Activated T-helper 1 cell treated with anti-CD3 and anti-CD28 coated beads, Interleukin-12 subunit alpha, Interleukin-12 subunit beta, Interleukin-2, Interleukin-4 antibody, amounts not matched to agents 30 ng/mL and 10 ng/mL and 1 ng/mL, durations not matched to agents 14 hours and 24 hours and 36 hours (primary cell): ENCODE measurements at regions of chr2 and their contacts with region 1.

Region 1: DNA sequence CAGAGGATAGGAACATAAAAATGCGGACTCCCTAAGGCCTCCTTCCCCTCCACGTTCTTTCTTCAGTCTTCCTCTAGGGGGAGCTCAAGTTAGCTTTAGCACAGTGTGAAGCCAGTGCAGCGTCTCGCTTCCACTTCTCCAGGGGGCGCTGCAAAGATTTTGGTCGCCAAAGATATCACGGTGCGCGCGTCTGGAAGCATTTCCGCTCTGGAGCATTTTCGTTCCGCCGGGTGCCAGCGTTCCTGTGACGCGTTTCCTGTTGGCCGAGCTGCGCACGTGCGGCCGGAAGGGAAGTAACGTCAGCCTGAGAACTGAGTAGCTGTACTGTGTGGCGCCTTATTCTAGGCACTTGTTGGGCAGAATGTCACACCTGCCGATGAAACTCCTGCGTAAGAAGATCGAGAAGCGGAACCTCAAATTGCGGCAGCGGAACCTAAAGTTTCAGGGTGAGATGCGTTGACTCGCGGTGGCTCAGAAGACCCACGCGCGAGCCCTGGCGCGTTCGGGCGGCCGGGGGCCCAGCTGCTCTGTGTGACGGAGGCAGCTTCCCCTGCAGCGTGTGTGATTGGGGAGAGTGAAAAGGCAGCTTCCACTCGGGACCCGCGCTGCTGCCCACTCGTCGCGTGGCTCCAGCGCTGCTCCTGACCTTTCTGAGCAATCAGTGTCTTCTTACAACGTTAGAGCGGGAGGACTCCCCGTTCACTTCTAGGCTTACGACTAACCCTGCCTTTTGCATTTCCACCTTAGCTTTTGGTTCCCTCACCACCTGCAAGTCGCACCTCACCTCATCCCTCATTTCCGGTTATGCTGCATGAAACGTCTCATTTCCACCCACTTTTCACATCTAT is at the start of gene DDX18:
- DNase-seq: peak; percentile 96
- H3K4me3 Mint-ChIP-seq: peak within 1 kb of the TSS; percentile 90
- H3K27ac Mint-ChIP-seq: peak within 1 kb of the TSS; percentile 94
- H3K4me1 Mint-ChIP-seq: peaks cover 40% of the 10 kb centered on the region
- H3K27me3 Mint-ChIP-seq: peaks cover 3% of the 10 kb centered on the region
- total RNA-seq, gene DDX18: 133 and 143 TPM in 2 replicates

Region 2: DNA sequence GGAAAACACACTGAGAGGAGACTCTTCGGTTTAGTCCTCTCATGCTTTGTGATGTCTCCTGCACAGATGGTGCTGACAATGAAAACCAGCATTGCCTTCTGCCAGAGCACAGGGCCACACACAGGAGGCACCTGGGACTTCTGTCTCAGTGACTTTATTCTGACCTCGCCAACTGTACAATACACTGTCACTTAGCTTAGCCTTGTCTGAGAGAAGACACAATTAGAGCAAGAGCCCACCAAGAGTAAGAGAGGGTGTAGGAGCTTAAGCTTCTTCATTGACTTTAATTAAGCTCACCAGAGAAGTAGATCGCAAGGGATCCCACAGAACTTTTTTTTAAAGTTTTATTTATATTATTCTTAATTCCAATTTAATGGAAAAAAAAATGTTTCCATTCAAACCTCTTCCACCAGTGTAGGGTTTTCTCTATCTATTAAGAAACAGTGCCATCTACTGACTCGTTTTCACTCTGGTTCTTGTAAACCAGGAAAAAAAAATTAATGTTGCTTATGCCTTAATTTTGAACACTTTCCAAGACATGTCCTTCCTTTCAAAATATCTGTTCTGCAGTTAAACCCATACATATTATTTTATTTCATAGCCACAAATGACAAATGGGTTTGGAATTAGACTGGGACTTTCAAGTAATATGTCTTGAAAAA is 42.5 kb before region 1 on chr2:
- intact Hi-C with region 1: no loop called
- DNase-seq: no peak
- H3K4me3 Mint-ChIP-seq: no peak overlapping the region
- H3K27ac Mint-ChIP-seq: no peak overlapping the region
- H3K4me1 Mint-ChIP-seq: no peaks in the 10 kb centered on the region
- H3K27me3 Mint-ChIP-seq: no peaks in the 10 kb centered on the region

Region 3: DNA sequence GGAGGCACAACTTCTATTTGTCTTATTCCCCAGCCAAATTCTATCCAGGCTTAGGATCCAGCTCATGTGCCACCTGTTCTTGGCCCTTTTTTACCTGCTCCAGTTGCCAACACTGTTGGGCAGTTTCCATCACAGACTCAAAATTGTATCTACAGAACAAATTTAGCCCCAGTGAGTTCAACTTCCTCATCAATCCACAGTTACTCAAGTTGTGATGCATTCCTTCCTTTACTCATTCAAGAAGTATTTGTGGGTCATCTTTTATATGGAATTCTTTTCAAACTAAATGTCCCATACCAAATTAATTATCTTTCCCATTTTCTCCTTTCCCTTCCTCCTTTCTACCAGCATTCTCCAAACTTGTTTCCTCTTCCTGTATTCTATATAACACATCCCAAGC is 12.8 kb before region 1 on chr2:
- intact Hi-C with region 1: loop called (anchors 1 kb)
- DNase-seq: no peak
- H3K4me3 Mint-ChIP-seq: no peak overlapping the region
- H3K27ac Mint-ChIP-seq: no peak overlapping the region
- H3K4me1 Mint-ChIP-seq: peaks cover 5% of the 10 kb centered on the region
- H3K27me3 Mint-ChIP-seq: peaks cover 13% of the 10 kb centered on the region

Region 4: GRCh38 chr2:118003396-118003824 is 188.8 kb after region 1 on chr2:
- intact Hi-C with region 1: loop called (anchors 1 kb)
- DNase-seq: peak; percentile 55
- H3K4me3 Mint-ChIP-seq: no peak overlapping the region
- H3K27ac Mint-ChIP-seq: no peak overlapping the region
- H3K4me1 Mint-ChIP-seq: peaks cover 7% of the 10 kb centered on the region
- H3K27me3 Mint-ChIP-seq: no peaks in the 10 kb centered on the region

Region 5: DNA sequence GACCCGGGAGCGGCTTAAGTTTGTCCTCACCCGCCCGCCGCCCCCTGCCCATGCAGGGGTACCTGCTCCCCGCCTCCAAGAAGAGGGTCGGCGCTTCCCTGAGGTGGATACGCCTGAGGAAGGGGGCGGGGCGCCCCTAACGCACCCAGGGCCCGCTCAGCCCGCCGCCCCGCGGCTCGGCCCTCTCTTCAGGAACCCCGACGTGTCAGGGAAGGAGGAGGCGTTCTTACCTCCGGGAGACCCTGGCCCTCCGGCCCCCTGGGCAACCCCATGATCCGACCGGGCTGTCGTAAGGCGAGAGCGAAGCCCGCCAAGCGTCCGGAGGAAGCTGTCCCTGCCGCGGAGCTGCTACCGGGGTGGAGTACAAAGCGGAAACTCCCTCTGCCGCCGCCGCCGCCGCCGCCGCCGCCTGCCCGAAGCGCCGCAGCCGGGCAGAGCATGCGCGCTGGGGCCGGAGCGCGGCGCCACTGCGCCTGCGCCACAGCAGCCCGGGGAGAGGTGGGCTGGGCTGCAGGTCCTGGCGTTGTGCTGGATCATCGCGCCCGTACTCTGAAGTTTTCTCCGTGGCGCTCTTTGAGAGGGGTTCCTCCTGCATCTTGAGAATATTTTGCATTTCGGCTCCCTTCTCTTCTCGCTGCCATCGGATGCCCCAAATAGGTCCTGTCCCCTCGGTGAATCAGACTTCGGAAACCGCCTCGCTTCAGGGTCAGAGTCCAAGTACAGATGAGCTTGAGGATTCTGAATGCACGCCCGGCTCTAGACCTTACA is 199.3 kb after region 1 on chr2 and contains the start of gene CCDC93:
- intact Hi-C with region 1: loop called (anchors 1 kb)
- DNase-seq: peak; percentile 87
- H3K4me3 Mint-ChIP-seq: peak within 1 kb of the TSS; percentile 92
- H3K27ac Mint-ChIP-seq: peak within 1 kb of the TSS; percentile 88
- H3K4me1 Mint-ChIP-seq: peaks cover 42% of the 10 kb centered on the region
- H3K27me3 Mint-ChIP-seq: no peaks in the 10 kb centered on the region
- total RNA-seq, gene CCDC93: 33.3 and 34.4 TPM in 2 replicates

Region 6: GRCh38 chr2:118186110-118186857 is 371.6 kb after region 1 on chr2:
- intact Hi-C with region 1: loop called (anchors 5 kb)
- DNase-seq: peak; percentile 83
- H3K4me3 Mint-ChIP-seq: peak overlapping the region; percentile 90
- H3K27ac Mint-ChIP-seq: peak overlapping the region; percentile 98
- H3K4me1 Mint-ChIP-seq: peaks cover 53% of the 10 kb centered on the region
- H3K27me3 Mint-ChIP-seq: no peaks in the 10 kb centered on the region

Region 7: DNA sequence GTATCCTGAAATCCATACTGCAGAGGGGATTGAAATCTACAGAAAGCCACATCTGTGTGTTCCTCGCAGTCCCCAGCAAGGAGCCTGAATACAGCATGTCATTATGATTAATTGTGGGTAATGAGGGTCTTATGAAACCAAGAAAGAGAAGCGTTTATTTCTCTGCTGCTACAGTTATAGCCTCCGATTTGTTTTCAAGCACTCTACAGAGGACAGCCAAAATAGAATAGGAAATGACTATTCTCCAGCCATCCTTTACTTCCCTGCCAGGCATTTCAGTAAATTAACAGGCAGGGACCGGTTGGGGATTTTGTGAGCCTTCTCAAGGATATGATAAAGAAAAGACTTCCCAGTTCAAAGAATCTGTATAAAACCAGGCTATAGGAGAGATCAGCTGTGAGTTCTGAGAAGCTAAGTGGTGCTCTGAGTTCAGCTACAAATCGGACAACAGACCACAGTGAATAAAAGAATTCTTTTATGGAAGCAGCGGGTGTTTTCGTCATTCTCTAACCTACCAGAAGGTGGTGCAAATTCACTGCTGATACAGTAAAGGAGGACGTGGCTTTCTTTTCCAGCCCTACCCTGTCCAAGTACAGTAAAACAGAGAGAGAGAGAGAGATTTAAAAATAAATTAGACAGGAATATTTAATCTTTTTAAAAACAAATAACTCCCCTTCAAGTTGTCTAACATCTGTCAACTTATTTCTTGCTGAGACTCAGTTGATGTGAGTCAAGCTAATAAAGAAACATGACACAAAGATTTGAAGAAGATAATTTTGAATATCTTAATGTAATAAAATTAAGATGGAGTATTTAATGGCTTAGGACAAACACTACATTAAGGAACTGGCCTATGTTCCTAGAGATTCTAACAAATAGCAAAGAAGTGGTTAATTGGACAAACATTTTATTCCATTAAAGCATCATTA is 407.3 kb after region 1 on chr2:
- intact Hi-C with region 1: loop called (anchors 10 kb)
- DNase-seq: peak; percentile 40
- H3K4me3 Mint-ChIP-seq: no peak overlapping the region
- H3K27ac Mint-ChIP-seq: no peak overlapping the region
- H3K4me1 Mint-ChIP-seq: peaks cover 40% of the 10 kb centered on the region
- H3K27me3 Mint-ChIP-seq: peaks cover 54% of the 10 kb centered on the region

Region 8: DNA sequence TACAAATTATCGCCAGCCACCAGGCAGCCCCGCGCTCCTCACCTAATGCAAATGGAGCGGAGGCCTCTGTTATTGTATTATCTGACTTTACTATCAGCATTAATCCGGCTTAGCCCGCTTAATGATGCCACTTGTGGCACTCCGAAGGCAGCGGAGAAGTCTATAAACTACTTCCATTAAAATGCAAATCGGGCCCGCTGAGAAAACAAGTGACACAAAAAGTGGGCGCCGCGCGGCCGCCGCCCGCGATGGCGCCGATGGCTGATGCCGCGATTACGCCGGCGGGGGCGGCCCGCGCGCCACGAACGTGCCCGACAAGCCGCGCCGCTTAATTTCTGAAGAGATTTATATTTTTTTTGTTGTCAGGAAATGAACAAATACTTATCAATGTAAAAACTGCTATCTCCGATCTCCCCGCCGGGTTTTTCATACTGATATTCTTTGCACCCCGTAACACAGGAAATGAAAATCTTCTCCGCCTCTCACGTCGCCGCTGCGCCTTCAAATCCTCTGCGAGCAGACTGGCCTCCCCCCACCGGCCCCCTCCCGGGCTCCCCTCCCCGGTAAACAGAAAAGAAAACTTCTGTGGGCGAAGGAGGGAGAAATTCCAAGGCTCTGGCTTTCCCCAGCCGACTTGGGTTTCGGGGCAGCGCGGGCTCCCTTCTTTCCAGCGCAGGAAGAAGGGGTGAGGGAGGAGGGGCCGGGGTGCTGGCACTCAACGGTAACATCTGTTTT is 495.5 kb after region 1 on chr2:
- intact Hi-C with region 1: loop called (anchors 2 kb)
- DNase-seq: peak; percentile 55
- H3K4me3 Mint-ChIP-seq: peak overlapping the region; percentile 83
- H3K27ac Mint-ChIP-seq: peak overlapping the region; percentile 89
- H3K4me1 Mint-ChIP-seq: no peaks in the 10 kb centered on the region
- H3K27me3 Mint-ChIP-seq: peaks cover 25% of the 10 kb centered on the region

Region 9: DNA sequence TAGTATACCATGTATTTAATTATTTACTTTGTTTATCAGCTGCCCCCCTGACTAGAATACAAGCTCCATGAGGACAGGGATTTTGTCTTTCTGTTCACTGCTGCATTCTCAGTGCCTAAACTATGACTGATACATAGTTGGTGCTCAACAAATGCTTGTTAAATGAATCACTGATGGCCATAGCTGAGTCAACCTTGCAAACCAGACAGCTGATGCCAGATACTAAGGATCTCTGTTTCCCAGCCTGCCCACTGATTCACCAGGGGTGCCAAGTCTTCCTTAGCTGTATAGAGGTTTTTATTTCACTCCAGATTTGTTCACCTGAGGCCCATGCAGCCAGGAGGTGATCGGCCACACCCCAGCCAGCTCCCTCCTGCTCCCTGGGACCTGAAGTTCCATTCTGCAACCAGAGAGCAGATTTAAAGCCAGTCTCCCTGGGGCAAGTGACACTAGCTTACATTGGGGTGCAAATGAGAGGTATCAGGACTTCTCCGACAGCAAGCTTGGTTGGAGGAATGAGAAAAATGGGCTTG is 1251.7 kb after region 1 on chr2:
- intact Hi-C with region 1: no loop called
- DNase-seq: no peak
- H3K4me3 Mint-ChIP-seq: no peak overlapping the region
- H3K27ac Mint-ChIP-seq: no peak overlapping the region
- H3K4me1 Mint-ChIP-seq: no peaks in the 10 kb centered on the region
- H3K27me3 Mint-ChIP-seq: no peaks in the 10 kb centered on the region